GM10248 (cell line): ENCODE measurements at regions of chr4 and their contacts with region 1.

Region 1: GRCh38 chr4:68375667-68376559 is 26.0 kb upstream of the YTHDC1 start:
- DNase-seq: peak; percentile 55
- CTCF ChIP-seq: peak; percentile 68

Region 2: DNA sequence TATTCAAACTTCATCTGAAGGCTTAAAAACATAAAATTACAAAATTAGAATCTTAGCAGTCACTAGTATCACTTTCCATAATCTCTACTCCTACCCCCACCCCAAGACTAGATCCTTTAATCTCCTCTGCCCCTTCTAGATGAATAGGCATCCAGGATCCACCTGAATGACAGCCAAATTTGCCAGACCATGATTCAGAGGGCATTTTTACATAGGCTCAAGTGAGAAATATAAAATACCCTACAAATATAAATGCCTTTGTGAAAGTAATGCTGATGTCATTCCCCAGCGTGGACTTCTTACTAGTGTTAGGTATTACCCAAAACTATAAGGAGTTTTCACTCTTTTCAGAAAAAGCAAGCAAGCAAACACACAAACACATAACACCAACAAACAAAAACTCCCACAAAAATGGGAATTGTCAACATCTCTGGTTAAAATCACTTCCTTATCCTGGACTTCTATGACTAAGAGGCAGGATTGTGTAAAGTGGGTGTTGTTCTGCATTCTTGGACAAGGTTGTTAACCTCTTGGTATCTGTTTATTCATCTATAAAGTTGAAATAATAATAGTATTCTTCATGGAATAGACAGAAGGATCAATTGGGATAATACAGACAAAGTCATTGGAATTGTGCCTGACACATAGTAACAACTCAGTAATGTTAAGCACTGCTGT is 194.9 kb before region 1 on chr4:
- CTCF ChIA-PET with region 1: no interaction called
- POLR2A ChIA-PET with region 1: no interaction called
- DNase-seq: no peak
- CTCF ChIP-seq: no peak

Region 3: DNA sequence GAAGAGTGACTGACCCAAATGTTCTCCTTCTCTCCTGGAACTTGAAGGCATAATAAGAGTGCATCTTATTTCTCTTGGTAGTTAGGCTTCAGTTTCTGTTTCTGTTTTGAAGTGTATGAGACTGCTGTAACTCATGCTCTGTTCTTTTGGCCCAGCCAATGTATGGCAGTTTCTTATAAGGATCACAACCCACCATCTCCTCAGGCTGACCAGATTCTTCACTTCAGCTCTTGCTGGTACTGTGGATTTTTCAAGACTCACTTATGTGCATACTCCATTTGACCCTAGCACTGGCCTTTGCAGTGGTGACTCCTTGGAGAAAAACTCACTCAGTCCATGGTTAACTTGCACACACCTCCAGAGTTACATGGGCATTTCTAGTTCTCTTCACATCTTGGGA is 16.4 kb before region 1 on chr4:
- CTCF ChIA-PET with region 1: interaction called, 22 read pairs
- POLR2A ChIA-PET with region 1: no interaction called
- DNase-seq: peak; percentile 13
- CTCF ChIP-seq: no peak

Region 4: DNA sequence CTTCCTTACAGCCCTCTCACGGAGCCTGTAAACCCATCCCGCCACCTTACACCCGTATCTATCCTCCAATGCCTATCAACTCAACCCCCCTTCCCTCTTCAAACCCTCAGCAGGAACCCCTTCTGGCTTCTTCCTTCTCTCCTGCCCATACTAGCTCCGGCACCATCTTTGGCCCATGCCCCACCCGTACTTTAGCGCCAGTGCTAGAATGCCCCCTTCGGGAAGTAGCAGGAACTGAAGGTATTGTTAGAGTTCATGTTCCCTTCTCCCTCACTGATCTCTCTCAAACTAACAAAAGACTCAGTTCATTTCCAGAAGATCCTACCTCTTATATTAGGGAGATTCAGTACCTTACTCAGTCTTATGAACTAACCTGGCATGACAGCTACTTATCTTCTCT is 297.2 kb after region 1 on chr4:
- CTCF ChIA-PET with region 1: no interaction called
- POLR2A ChIA-PET with region 1: no interaction called
- DNase-seq: no peak
- CTCF ChIP-seq: no peak